CD14-positive monocyte (primary cell): ENCODE measurements at regions of chr4 and their contacts with region 1.

Region 1: DNA sequence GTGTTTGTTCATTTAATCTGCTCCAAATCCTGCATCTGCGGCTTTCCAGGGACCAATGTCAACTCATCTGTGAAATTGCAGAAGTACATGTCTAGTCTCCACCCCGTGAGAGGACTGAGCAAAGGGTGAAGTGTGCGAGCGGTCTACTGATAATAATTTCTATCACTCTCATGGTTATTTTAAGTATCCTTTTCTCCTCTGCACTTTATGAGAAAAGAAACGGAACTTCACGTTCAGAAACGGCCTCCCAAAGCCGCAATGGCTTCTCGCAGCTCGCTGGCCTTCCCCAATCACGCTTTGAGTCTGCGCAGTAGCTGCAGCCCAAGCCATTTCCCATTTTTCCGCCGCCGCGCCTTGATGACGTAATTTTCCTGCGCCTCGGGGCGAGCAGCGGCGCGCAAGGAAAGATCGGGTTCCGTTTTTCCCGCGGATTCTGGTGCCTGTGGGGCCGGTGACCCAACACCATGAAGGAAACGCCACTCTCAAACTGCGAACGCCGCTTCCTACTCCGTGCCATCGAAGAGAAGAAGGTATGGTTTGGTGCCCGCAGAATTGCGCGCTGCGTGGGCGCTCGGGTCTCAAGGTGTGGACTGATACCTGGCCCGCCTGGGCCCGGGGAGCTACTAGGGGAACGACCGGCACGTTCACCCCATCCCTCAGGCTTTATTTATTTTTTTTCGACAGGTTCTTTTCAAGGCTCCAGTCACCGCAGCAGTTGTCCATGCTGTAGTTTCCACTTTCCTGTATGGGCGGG is at the start of gene EXOSC9:
- DNase-seq: peak; percentile 90 to 97 (median 96)
- H3K4me3 ChIP-seq: peak within 1 kb of the TSS; percentile 69 to 95 (median 74)
- H3K4me3 Mint-ChIP-seq: peak within 1 kb of the TSS; percentile 87 to 95
- H3K27ac ChIP-seq: peak within 1 kb of the TSS; percentile 75 to 95
- H3K27ac Mint-ChIP-seq: peak within 1 kb of the TSS; percentile 93 to 99 (median 98)
- H3K4me1 ChIP-seq: peaks cover 17 to 30% of the 10 kb centered on the region in 2 donors
- H3K4me1 Mint-ChIP-seq: peaks cover 23% of the 10 kb centered on the region
- H3K27me3 ChIP-seq: no peaks in the 10 kb centered on the region
- H3K27me3 Mint-ChIP-seq: peaks cover 2 to 3% (median 2%) of the 10 kb centered on the region in 3 donors
- CTCF ChIP-seq: no peak
- polyA plus RNA-seq, gene EXOSC9: 13.9 to 21.4 (median 21.3) TPM

Region 2: DNA sequence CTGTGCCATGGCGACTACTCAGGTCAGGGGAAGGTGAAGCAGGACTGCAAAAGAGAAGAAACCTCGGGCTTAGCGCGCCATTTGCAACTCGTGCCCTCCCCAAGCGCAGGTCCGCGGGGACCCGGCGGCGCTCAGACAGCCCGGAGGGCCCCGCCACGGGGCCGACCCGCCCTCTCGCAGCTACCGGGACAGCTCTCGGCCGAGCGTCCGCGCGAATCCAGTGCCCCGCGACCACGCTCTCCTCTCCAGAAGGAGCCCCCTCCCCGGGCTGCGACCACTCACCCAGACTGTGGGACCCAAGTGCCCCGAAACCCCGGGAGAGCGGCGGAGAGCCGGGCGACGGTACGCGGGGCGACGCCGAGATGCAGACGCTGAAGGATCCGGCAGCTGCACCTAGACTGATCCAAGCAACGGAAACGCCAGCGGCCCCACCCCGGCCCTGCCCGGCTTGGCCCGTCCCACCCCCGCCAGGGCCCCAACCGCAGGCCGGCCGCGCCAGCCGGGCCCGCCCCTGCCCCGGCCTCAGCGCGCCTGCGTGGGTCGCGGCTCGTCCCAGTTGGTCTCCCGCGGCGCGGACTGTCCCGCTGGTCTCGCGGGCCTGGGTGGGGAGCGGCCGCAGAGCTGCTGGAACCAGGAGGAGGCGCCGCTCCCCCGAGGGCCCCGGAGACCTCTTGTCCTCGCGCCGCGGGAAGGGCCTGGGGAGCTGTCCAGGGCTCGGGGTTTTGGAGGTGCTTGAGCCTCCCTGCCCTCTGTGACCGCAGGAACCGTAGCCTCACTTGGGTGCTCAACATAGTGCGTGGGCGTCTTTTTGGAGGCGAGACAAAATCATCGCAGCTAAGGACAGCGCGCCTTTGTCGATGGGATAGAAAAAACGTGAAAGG is 104.3 kb before region 1 on chr4 and contains the start of gene ANXA5:
- intact Hi-C with region 1: loop called in 1 of 2 experiments (anchors 5 kb)
- DNase-seq: peak; percentile 85 to 92 (median 89)
- H3K4me3 ChIP-seq: peak within 1 kb of the TSS; percentile 73 to 88 (median 78)
- H3K4me3 Mint-ChIP-seq: peak within 1 kb of the TSS; percentile 98 to 100
- H3K27ac ChIP-seq: peak within 1 kb of the TSS; percentile 98 to 99
- H3K27ac Mint-ChIP-seq: peak within 1 kb of the TSS; percentile 100
- H3K4me1 ChIP-seq: peaks cover 25 to 46% of the 10 kb centered on the region in 2 donors
- H3K4me1 Mint-ChIP-seq: peaks cover 41% of the 10 kb centered on the region
- H3K27me3 ChIP-seq: peaks cover 0 to 14% of the 10 kb centered on the region in 2 donors
- H3K27me3 Mint-ChIP-seq: peaks cover 14 to 25% (median 18%) of the 10 kb centered on the region in 3 donors
- CTCF ChIP-seq: peak; percentile 33
- polyA plus RNA-seq, gene ANXA5: 312 to 796 (median 752) TPM

Region 3: GRCh38 chr4:121823505-121824170 is 22.5 kb after region 1 on chr4 and contains the start of gene CCNA2:
- intact Hi-C with region 1: loop called (anchors 2 kb)
- DNase-seq: peak; percentile 90 to 93 (median 90)
- H3K4me3 ChIP-seq: peak within 1 kb of the TSS; percentile 72 to 98 (median 77)
- H3K4me3 Mint-ChIP-seq: peak within 1 kb of the TSS; percentile 92 to 97
- H3K27ac ChIP-seq: peak within 1 kb of the TSS; percentile 11 to 81
- H3K27ac Mint-ChIP-seq: peak within 1 kb of the TSS; percentile 73 to 94 (median 87)
- H3K4me1 ChIP-seq: peaks cover 11 to 27% of the 10 kb centered on the region in 2 donors
- H3K4me1 Mint-ChIP-seq: peaks cover 20% of the 10 kb centered on the region
- H3K27me3 ChIP-seq: no peaks in the 10 kb centered on the region
- H3K27me3 Mint-ChIP-seq: no peaks in the 10 kb centered on the region
- CTCF ChIP-seq: no peak
- polyA plus RNA-seq, gene CCNA2: 0.20 to 0.23 TPM in 2 of 3 donors, not detected in the other